ENCODE measurements at regions of chr16 and their contacts with region 1.

Region 1: GRCh38 chr16:10964039-10964890 is 19.9 kb downstream of the CLEC16A start:
- DNase-seq: peak; percentile 86 to 92
- ATAC-seq: peak; percentile 84 to 91 (median 88)
- H3K4me3 ChIP-seq: no peak overlapping the region
- H3K27ac ChIP-seq: peak overlapping the region; percentile 68
- H3K4me1 ChIP-seq: peaks cover 18% of the 10 kb centered on the region
- H3K27me3 ChIP-seq: no peaks in the 10 kb centered on the region
- CTCF ChIP-seq: peak; percentile 98

Region 2: DNA sequence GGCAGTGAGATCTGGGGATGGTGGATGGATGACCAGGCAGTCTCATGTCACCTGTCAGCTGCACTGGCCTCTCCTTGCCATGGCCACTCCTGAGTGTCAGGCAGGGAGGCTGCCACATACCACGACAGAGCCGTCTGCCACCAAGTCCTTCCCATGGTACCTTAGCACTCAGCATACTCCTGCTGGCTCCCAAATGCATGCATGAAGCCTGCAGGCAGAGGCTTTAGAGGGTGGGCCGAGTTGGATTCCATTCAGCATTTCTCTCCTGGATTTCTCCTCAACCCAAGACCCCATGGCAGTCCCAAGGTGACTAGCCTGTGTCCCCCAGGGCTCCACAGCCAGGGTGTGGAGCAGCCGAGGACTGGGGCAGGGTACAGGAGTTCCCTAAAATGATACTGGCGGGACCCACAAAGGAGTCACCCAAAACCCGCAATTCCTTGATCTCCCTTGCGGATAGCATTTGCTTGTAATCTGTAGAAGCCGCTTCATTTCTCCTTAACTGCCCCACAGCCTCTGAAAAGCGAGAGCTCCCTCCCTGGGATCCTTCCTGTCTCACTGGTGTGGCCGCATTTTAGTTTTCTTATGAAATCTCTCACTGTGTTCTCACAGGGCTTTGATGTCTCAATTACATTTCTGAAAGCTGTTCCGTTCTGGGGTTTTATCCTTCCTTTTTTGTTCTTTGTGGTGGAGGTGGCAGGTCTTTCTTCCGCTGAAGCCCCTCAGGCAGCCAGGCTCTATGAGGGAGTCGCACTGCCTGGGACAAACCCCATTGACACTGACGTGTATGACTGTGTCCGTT is 150.3 kb after region 1 on chr16:
- intact Hi-C with region 1: no loop called
- DNase-seq: no peak
- ATAC-seq: no peak
- H3K4me3 ChIP-seq: no peak overlapping the region
- H3K27ac ChIP-seq: no peak overlapping the region
- H3K4me1 ChIP-seq: no peaks in the 10 kb centered on the region
- H3K27me3 ChIP-seq: no peaks in the 10 kb centered on the region
- CTCF ChIP-seq: no peak

Region 3: DNA sequence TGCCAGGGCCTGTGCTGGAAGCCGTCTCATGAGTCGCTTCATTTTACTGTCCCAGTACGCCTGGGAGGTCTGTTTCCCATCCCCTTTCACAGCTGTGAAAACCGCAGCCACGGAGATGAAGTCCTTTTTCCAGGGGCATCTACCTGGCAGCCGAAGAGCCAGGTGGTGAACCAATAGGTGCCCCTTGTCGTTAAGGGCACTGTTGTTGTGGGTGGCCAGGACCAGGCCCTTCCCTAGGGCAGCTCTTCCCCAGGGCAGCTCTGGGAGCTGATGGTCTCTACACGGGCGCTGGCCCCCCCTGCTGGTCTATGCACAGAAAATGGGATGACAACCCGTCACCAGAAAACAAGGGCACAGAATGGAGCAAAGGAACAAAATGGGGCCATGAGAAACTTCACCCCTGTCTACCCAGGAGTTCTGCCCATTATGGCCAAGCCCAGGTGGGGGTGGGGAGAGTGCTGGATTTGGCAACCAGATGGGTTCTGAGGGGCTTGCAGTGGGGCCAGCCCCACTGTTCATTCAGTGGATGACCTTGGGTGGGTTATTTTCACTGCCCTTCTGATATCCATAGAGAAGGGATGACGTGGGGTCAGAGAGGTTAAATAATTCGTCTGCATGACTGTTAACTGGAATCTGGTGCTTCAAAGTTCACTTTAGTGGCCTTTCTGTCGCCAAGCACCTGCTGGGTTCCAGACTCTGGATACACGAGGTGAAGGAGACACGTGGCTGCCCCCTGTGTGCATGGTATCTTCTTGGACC is 392.5 kb after region 1 on chr16:
- intact Hi-C with region 1: loop called (anchors 2 to 10 kb)
- DNase-seq: peak; percentile 68 to 78
- ATAC-seq: peak; percentile 31 to 74 (median 48)
- H3K4me3 ChIP-seq: no peak overlapping the region
- H3K27ac ChIP-seq: no peak overlapping the region
- H3K4me1 ChIP-seq: peaks cover 6% of the 10 kb centered on the region
- H3K27me3 ChIP-seq: peaks cover 0 to 7% (median 0%) of the 10 kb centered on the region in 3 donors
- CTCF ChIP-seq: peak; percentile 45